Caco-2 (cell line): ENCODE measurements at regions of chr2 and their contacts with region 1.

Region 1: GRCh38 chr2:103959174-103960128 is 894.5 kb upstream of the POU3F3 start:
- DNase-seq: peak; percentile 50 to 59
- H3K4me3 ChIP-seq: no peak overlapping the region
- H3K4me3 Mint-ChIP-seq: no peak overlapping the region
- H3K27ac Mint-ChIP-seq: no peak overlapping the region
- H3K4me1 ChIP-seq: no peaks in the 10 kb centered on the region
- H3K4me1 Mint-ChIP-seq: no peaks in the 10 kb centered on the region
- H3K27me3 ChIP-seq: no peaks in the 10 kb centered on the region
- H3K27me3 Mint-ChIP-seq: peaks cover 11% of the 10 kb centered on the region
- CTCF ChIP-seq: peak; percentile 71 to 87

Region 2: DNA sequence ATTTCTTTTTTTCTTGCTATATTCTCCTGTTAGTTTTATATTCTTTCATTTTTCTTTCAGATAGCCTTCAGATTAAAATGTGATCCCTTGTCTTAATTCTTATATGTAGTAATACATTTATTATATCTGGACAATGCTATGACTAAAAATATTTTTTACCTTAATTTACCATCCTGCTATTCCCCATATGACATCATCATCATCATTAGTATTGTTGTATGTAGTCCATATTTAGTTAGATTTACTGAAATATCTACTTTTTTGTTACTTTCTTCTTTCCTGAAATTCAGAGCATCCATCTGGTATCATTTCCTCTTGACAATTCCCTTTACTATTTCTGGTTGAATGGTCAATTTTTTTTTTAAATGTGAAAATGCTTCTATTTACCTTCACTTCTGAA is 57.1 kb before region 1 on chr2:
- CTCF ChIA-PET with region 1: no interaction called
- POLR2A ChIA-PET with region 1: no interaction called
- intact Hi-C with region 1: no loop called
- DNase-seq: no peak
- H3K4me3 ChIP-seq: no peak overlapping the region
- H3K4me3 Mint-ChIP-seq: no peak overlapping the region
- H3K27ac Mint-ChIP-seq: no peak overlapping the region
- H3K4me1 ChIP-seq: no peaks in the 10 kb centered on the region
- H3K4me1 Mint-ChIP-seq: no peaks in the 10 kb centered on the region
- H3K27me3 ChIP-seq: no peaks in the 10 kb centered on the region
- H3K27me3 Mint-ChIP-seq: peaks cover 3% of the 10 kb centered on the region
- CTCF ChIP-seq: no peak

Region 3: GRCh38 chr2:104033399-104033798 is 73.9 kb after region 1 on chr2:
- CTCF ChIA-PET with region 1: no interaction called
- POLR2A ChIA-PET with region 1: no interaction called
- intact Hi-C with region 1: no loop called
- DNase-seq: peak in 1 of 2 experiments; percentile 22
- H3K4me3 ChIP-seq: no peak overlapping the region
- H3K4me3 Mint-ChIP-seq: no peak overlapping the region
- H3K27ac Mint-ChIP-seq: no peak overlapping the region
- H3K4me1 ChIP-seq: no peaks in the 10 kb centered on the region
- H3K4me1 Mint-ChIP-seq: no peaks in the 10 kb centered on the region
- H3K27me3 ChIP-seq: no peaks in the 10 kb centered on the region
- H3K27me3 Mint-ChIP-seq: peaks cover 5% of the 10 kb centered on the region
- CTCF ChIP-seq: peak; percentile 24 to 47

Region 4: GRCh38 chr2:104849618-104850141 is 890.2 kb after region 1 on chr2:
- CTCF ChIA-PET with region 1: interaction called, 3 read pairs
- POLR2A ChIA-PET with region 1: no interaction called
- intact Hi-C with region 1: loop called (anchors 1 kb)
- DNase-seq: peak in 1 of 2 experiments; percentile 66
- H3K4me3 ChIP-seq: no peak overlapping the region
- H3K4me3 Mint-ChIP-seq: no peak overlapping the region
- H3K27ac Mint-ChIP-seq: no peak overlapping the region
- H3K4me1 ChIP-seq: peaks cover 7% of the 10 kb centered on the region
- H3K4me1 Mint-ChIP-seq: peaks cover 15% of the 10 kb centered on the region
- H3K27me3 ChIP-seq: peaks cover 6% of the 10 kb centered on the region
- H3K27me3 Mint-ChIP-seq: peaks cover 73% of the 10 kb centered on the region
- CTCF ChIP-seq: peak; percentile 73 to 75

Region 5: DNA sequence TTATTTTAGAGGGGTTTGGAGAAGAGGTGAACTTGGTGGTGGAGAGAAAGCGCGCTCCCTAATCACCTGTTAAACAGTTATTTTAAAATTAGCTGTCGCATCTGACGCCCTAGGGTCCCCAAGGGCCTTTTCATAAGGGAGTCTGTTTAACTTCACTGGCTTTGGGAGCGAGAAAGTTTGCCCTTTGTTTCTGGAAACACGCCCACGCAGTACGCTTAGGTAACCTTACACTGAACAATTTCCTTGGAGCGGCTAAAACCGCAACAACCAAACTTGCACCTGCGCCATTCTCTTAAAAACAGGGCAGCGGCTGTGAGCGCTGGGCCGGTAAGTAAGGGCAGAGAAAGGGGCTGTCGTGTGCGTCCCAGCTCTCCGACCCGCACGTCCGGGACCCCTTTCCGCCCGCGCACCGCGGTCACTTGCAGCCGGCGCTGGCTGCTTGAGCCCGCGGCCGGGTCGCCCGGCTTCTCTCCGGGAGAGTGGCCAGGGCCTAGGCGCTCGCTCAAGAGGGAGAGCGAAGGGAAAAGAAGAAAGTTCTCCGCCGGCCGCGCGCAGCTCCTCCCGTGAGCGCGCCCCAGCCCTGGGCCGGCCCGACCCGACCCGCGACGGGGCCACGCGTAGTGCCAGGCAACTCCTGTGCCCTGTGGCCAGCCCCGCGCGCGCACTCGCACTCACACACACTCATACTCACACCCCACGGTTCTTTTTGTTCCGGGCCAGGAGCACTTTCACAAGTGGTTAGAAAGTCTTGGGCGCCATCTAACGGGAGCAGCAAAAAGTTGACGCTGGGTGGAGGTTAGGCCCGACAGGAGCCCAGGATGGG is 913.6 kb after region 1 on chr2:
- CTCF ChIA-PET with region 1: no interaction called
- POLR2A ChIA-PET with region 1: no interaction called
- intact Hi-C with region 1: loop called (anchors 5 kb)
- DNase-seq: peak; percentile 67 to 70
- H3K4me3 ChIP-seq: peak overlapping the region; percentile 37
- H3K4me3 Mint-ChIP-seq: peak overlapping the region; percentile 54
- H3K27ac Mint-ChIP-seq: no peak overlapping the region
- H3K4me1 ChIP-seq: peaks cover 4% of the 10 kb centered on the region
- H3K4me1 Mint-ChIP-seq: no peaks in the 10 kb centered on the region
- H3K27me3 ChIP-seq: peaks cover 3% of the 10 kb centered on the region
- H3K27me3 Mint-ChIP-seq: peaks cover 20% of the 10 kb centered on the region
- CTCF ChIP-seq: peak; percentile 59 to 65